Naive thymus-derived CD4-positive, alpha-beta T cell (primary cell): ENCODE measurements at regions of chr22 and their contacts with region 1.

Region 1: GRCh38 chr22:24310969-24311368 is 40.3 kb downstream of the SPECC1L start:
- DNase-seq: no peak
- ATAC-seq: no peak
- H3K4me3 ChIP-seq: no peak overlapping the region
- H3K4me3 Mint-ChIP-seq: no peak overlapping the region
- H3K27ac ChIP-seq: no peak overlapping the region
- H3K27ac Mint-ChIP-seq: peak overlapping the region in 2 of 9 donors; percentile 33 to 45
- H3K4me1 ChIP-seq: peaks cover 0 to under 1% of the 10 kb centered on the region in 2 donors
- H3K4me1 Mint-ChIP-seq: peaks cover 7 to 31% (median 19%) of the 10 kb centered on the region in 7 donors
- H3K27me3 ChIP-seq: no peaks in the 10 kb centered on the region
- H3K27me3 Mint-ChIP-seq: no peaks in the 10 kb centered on the region

Region 2: GRCh38 chr22:24353121-24353520 is 42.2 kb after region 1 on chr22:
- CTCF ChIA-PET with region 1: no interaction called
- POLR2A ChIA-PET with region 1: no interaction called
- intact Hi-C with region 1: loop called in 1 of 2 experiments (anchors 5 kb)
- DNase-seq: no peak
- ATAC-seq: no peak
- H3K4me3 ChIP-seq: no peak overlapping the region
- H3K4me3 Mint-ChIP-seq: no peak overlapping the region
- H3K27ac ChIP-seq: no peak overlapping the region
- H3K27ac Mint-ChIP-seq: peak overlapping the region in 1 of 9 donors; percentile 28
- H3K4me1 ChIP-seq: no peaks in the 10 kb centered on the region
- H3K4me1 Mint-ChIP-seq: peaks cover 0 to 11% (median 0%) of the 10 kb centered on the region in 7 donors
- H3K27me3 ChIP-seq: no peaks in the 10 kb centered on the region
- H3K27me3 Mint-ChIP-seq: no peaks in the 10 kb centered on the region